ENCODE measurements at regions of chr19 and their contacts with region 1.

Region 1: DNA sequence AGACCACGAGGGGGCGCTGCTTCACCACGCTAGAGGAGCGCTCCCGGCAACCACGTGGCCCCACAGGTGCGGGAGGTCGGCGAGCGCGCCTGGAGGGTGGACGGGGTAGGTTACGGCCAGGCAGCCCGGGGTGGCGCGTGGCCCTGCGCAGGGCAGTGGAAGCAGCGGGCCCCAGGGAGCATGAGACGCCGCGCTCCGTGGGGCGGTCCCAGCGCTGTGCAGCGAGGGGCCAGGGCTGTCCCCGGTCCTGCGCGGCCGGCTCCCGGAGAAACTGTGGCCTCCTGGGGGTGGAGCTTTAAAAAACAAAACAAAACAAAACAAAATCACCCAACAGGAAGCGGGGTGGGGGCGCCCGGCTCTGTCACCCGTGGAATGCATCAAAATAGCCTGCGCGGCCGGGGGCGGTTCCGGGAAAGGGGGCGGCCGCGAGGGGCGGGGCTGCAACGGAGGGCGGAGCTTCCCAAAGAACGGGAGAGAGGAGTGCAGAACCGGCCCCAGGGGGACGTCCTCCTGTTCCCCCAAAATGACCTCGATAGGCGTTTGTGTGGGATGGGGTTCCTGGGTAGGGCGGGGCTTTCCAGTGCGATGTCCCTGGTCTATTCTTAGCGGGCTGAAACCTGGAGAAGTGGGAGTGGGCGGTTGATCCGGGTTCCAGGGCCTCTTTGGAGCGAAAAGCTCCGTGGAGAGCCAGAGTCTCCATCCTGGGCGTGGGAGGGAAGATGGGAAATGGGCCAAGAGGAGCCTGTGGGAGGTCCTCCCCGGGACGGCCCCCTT is 27.3 kb downstream of the NUMBL start:
- DNase-seq: peak; percentile 82
- H3K4me3 ChIP-seq: peak overlapping the region; percentile 44 to 63 (median 51)
- H3K27ac ChIP-seq: no peak overlapping the region
- H3K4me1 ChIP-seq: peaks cover 13% of the 10 kb centered on the region
- H3K27me3 ChIP-seq: no peaks in the 10 kb centered on the region
- CTCF ChIP-seq: peak; percentile 84 to 96
- POLR2A ChIP-seq: peak; percentile 10

Region 2: DNA sequence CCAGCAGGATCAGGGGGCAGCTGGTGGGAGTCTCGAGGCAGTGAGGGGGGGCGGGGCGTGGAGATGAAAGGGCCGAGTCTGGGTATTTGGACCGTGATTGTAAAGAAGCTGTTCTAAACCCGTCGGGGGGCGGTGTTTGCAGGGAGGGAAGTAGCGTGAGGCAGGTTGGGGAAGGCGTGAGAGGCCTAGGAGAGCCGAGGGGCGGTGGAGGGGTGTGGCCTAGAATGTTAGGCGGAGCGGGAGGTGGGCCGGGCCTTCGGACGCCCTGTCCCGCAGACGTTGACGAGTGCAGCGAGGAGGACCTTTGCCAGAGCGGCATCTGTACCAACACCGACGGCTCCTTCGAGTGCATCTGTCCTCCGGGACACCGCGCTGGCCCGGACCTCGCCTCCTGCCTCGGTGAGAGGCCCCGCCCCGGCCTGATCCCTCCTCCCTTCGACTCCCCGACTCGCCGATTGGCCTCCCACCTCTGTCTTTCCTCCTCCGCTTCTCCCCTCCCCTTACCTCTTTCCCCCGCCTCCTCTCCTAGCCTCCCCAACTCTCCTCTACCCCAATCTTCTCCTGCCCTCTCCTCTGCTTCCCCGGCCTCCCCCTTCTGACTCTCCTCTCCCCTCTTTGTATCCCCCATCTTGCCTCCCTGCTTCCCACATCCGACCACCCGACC is 49.3 kb before region 1 on chr19:
- CTCF ChIA-PET with region 1: no interaction called
- POLR2A ChIA-PET with region 1: no interaction called
- dilution Hi-C with region 1: no loop called
- intact Hi-C with region 1: no loop called
- DNase-seq: no peak
- H3K4me3 ChIP-seq: peak overlapping the region; percentile 26 to 46 (median 43)
- H3K27ac ChIP-seq: peak overlapping the region; percentile 48
- H3K4me1 ChIP-seq: peaks cover 24% of the 10 kb centered on the region
- H3K27me3 ChIP-seq: no peaks in the 10 kb centered on the region
- CTCF ChIP-seq: no peak
- POLR2A ChIP-seq: no peak

Region 3: DNA sequence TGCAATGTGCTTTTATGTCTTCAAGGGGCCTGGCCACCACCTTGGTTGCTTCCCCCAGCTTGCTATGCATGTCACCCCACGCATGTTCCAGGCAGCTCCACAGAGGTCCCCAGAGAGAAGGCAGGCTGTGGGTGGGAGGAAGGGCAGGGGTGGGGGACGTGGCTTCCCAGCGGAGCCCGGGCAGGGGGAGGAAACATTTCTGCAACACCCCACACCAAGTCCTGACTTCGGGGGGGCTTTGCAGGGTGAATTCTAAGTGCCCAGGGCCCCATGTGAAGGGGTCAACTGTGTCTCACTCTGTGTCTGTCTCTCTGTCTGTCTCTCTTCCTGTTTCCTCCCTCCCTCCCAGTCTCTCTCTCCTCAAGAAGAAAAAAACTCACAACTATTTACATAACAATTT is 22.4 kb before region 1 on chr19:
- CTCF ChIA-PET with region 1: interaction called, 11 read pairs
- POLR2A ChIA-PET with region 1: no interaction called
- dilution Hi-C with region 1: no loop called
- intact Hi-C with region 1: no loop called
- DNase-seq: peak; percentile 19
- H3K4me3 ChIP-seq: no peak overlapping the region
- H3K27ac ChIP-seq: peak overlapping the region; percentile 10
- H3K4me1 ChIP-seq: peaks cover 14% of the 10 kb centered on the region
- H3K27me3 ChIP-seq: no peaks in the 10 kb centered on the region
- CTCF ChIP-seq: no peak
- POLR2A ChIP-seq: no peak

Region 4: DNA sequence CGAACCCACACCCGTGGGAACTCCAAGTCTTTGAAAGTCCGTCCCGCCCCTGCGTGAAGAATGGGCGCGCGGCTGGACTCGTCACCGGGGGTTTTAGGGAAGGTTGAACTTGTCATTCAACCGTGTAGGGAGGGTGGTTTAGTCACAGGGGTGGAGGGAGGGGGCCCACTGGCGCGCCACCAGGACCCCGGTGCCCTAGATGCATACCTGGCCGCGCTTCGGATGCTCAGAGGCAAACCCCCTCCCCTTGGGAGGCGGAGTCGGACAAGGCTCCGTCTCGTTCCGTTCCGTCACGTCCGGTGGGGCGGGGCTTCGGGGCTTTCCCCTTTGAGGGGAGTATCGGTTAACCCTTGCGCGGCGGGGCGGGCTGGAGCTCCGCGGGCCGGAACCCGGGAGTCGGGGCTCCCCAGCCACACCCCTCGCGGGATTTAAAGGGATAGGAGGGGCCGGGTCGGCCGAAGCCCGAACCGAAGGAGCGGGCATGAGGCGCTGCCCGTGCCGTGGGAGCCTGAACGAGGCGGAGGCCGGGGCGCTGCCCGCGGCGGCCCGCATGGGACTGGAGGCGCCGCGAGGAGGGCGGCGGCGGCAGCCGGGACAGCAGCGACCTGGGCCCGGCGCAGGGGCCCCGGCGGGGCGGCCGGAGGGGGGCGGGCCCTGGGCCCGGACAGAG is 53.7 kb after region 1 on chr19 and contains the starts of genes COQ8B and ITPKC:
- CTCF ChIA-PET with region 1: interaction called, 6 read pairs
- POLR2A ChIA-PET with region 1: no interaction called
- dilution Hi-C with region 1: no loop called
- intact Hi-C with region 1: loop called (anchors 1 kb)
- DNase-seq: peak; percentile 97
- H3K4me3 ChIP-seq: peak within 1 kb of the TSS; percentile 39 to 78 (median 53)
- H3K27ac ChIP-seq: peak within 1 kb of the TSS; percentile 94
- H3K4me1 ChIP-seq: peaks cover 52% of the 10 kb centered on the region
- H3K27me3 ChIP-seq: no peaks in the 10 kb centered on the region
- CTCF ChIP-seq: no peak
- POLR2A ChIP-seq: peak; percentile 62
- total RNA-seq, gene COQ8B: 15.3 and 19.2 TPM in 2 replicates
- total RNA-seq, gene ITPKC: 16.1 and 16.9 TPM in 2 replicates

Region 5: DNA sequence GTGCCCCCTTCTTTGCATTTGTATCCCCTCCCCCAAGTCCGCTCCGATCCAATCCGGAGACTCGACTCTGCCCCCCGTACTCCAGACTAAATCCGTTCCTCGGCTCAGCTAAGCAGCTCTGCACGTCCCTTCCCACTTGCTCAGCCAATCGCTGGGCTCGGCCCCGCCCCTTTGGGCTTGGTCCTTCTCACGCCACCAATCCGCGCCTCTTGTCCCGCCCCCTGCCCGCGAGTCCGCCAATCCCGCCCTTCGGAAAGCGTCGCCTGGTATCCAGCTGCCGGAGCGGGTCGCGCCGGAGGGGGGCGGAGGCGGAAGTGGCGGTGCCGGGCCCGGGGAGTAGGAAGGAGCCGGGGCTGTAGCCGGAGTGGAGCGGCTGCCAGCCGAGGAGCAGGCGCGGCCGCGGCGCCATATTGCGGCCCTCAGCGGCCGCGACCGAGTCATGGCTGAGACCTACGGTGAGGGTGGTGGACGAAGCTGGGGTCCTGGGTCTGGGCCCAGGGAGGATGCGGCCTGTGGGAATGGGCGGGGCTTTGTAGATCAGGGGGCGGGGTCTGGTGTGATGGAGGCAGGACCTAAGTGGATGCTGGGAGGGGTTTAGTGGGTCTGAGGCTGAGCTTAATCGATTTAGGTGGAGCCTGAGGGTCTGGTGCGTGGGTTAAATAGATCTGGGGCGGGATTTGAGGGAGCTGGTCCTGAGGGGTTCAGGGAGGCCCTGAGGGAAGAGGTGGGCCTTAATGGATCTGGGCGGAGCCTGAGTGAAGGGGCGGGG is 115.0 kb after region 1 on chr19 and contains the start of gene RAB4B:
- CTCF ChIA-PET with region 1: interaction called, 14 read pairs
- POLR2A ChIA-PET with region 1: interaction called, 5 read pairs
- dilution Hi-C with region 1: no loop called
- intact Hi-C with region 1: no loop called
- DNase-seq: peak; percentile 100
- H3K4me3 ChIP-seq: peak within 1 kb of the TSS; percentile 56 to 76 (median 71)
- H3K27ac ChIP-seq: peak within 1 kb of the TSS; percentile 80
- H3K4me1 ChIP-seq: peaks cover 17% of the 10 kb centered on the region
- H3K27me3 ChIP-seq: no peaks in the 10 kb centered on the region
- CTCF ChIP-seq: no peak
- POLR2A ChIP-seq: no peak
- total RNA-seq, gene RAB4B: 31.4 and 33.6 TPM in 2 replicates

Region 6: DNA sequence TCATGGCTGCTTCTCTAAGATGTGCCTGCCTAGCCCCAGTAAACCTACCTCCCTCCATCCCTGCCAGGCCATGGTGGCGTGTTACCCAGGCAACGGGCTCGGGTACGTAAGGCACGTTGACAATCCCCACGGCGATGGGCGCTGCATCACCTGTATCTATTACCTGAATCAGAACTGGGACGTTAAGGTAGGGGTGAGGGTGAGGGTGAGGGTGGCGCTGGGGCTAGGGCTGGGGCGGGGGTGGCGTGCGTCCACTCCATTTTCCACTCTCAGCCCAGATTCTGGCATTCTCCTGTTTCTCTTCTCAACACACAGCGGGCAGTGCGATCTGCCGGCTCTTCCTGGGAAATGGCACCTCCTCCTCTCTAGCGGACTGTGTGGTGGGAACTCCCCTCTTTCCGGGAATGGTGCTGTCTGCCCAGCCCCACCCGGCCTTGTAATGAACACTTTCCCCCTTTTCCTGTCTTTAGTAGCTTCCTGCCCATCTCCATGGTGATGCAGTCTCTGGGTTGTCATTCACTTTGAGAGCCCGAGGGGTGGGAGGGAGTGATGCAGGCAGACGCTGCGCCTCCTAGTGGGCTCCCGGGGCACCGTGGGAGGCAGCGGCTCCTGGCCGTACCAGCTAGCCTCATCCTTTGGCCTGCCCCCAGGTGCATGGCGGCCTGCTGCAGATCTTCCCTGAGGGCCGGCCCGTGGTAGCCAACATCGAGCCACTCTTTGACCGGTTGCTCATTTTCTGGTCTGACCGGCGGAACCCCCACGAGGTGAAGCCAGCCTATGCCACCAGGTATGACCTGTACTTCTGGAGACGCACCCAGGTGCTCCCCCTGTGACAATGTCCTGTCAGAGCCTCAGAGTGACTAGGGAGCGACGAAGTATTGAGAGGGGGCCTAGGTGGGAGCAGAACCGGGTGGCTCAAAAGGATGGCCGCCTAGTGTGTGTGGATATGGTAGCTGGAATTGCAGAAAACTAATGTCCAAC is 143.7 kb after region 1 on chr19:
- CTCF ChIA-PET with region 1: interaction called, 70 read pairs
- POLR2A ChIA-PET with region 1: interaction called, 3 read pairs
- dilution Hi-C with region 1: no loop called
- intact Hi-C with region 1: loop called (anchors 1 kb)
- DNase-seq: peak; percentile 99
- H3K4me3 ChIP-seq: peak overlapping the region in 1 of 3 experiments; percentile 9
- H3K27ac ChIP-seq: peak overlapping the region; percentile 35
- H3K4me1 ChIP-seq: peaks cover 63% of the 10 kb centered on the region
- H3K27me3 ChIP-seq: peaks cover 0 to under 1% of the 10 kb centered on the region in 2 experiments
- CTCF ChIP-seq: peak; percentile 99
- POLR2A ChIP-seq: peak; percentile 29

Region 7: GRCh38 chr19:40822161-40822560 is 159.1 kb after region 1 on chr19:
- CTCF ChIA-PET with region 1: interaction called, 64 read pairs
- POLR2A ChIA-PET with region 1: no interaction called
- dilution Hi-C with region 1: no loop called
- intact Hi-C with region 1: loop called (anchors 1 kb)
- DNase-seq: no peak
- H3K4me3 ChIP-seq: no peak overlapping the region
- H3K27ac ChIP-seq: no peak overlapping the region
- H3K4me1 ChIP-seq: peaks cover 6% of the 10 kb centered on the region
- H3K27me3 ChIP-seq: no peaks in the 10 kb centered on the region
- CTCF ChIP-seq: no peak
- POLR2A ChIP-seq: no peak